ENCODE measurements at regions of chr7 and their contacts with region 1.

Region 1: GRCh38 chr7:22488643-22489462 is 11.1 kb downstream of the STEAP1B start:
- DNase-seq: no peak
- ATAC-seq: peak; percentile 83
- H3K4me3 ChIP-seq: no peak overlapping the region
- H3K27ac ChIP-seq: no peak overlapping the region
- H3K4me1 ChIP-seq: no peaks in the 10 kb centered on the region
- H3K27me3 ChIP-seq: no peaks in the 10 kb centered on the region

Region 2: GRCh38 chr7:22103255-22103969 is 385.4 kb before region 1 on chr7:
- intact Hi-C with region 1: loop called (anchors 2 kb)
- DNase-seq: peak in 1 of 2 donors; percentile 67
- ATAC-seq: peak; percentile 71
- H3K4me3 ChIP-seq: no peak overlapping the region
- H3K27ac ChIP-seq: no peak overlapping the region
- H3K4me1 ChIP-seq: no peaks in the 10 kb centered on the region
- H3K27me3 ChIP-seq: no peaks in the 10 kb centered on the region

Region 3: DNA sequence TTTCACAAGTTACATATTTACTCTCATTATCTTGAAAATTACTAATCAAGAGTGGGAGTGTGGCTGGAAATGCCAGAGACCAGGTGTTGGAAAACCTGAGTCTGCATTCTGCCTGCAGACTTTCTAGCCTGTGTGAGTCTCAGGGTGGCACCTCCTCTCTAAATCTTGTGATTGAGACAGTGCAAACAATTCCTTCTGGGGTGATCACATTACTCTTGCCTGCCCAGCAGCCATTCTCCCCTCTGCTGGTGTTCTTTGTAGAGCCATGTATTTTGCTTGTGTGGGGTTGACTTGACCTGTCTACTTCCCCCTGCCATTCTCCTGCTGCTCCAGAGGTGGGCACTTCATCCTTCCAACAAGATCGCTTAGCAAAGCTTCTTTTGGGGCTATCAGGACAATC is 233.0 kb before region 1 on chr7:
- intact Hi-C with region 1: loop called (anchors 5 to 10 kb)
- DNase-seq: no peak
- ATAC-seq: peak; percentile 46
- H3K4me3 ChIP-seq: no peak overlapping the region
- H3K27ac ChIP-seq: no peak overlapping the region
- H3K4me1 ChIP-seq: no peaks in the 10 kb centered on the region
- H3K27me3 ChIP-seq: no peaks in the 10 kb centered on the region

Region 4: DNA sequence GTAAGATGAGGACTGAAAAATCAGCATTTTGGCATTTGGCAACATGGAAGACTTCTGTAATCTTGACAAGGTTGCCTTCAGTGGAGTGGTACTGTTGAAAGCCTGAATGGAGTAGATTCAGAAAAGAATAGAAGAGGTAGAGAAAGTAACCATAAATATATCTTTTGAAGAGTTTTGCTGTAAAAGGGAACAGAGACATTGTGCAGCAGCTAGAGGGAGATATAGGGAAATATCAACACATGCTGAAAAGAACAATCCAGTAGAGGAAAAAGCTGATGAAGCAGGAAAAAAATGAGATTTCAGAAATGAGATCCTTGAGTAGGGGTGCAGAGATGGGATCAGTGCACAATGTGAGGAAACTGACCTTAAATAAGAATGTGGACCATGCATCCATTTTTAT is 191.9 kb before region 1 on chr7:
- intact Hi-C with region 1: no loop called
- DNase-seq: no peak
- ATAC-seq: no peak
- H3K4me3 ChIP-seq: no peak overlapping the region
- H3K27ac ChIP-seq: no peak overlapping the region
- H3K4me1 ChIP-seq: no peaks in the 10 kb centered on the region
- H3K27me3 ChIP-seq: no peaks in the 10 kb centered on the region